ENCODE measurements at regions of chr1 and their contacts with region 1.

Region 1: DNA sequence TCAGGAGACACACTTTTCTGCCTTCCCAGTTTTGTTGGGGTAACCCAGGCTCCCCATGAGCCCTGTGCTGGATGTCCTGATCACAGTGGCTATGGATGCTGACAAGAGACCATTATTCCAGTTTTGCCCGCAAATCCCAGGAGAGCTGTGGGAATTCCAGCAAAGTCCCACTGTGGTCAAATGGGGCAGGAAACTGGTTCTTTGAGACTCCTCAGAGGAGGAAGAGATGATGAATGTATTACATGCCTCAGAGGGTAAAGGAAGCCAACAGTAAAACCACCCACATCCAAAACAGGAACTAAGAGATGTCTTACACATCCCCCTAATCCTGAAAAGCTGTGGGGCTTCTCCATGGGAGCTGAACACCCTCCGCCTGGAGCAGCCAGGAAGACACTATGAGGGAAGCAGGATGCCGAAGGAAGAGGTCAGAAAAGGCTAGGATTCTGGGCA is 12.8 kb upstream of the MPZL1 start:
- DNase-seq: no peak
- ATAC-seq: no peak
- H3K4me3 ChIP-seq: no peak overlapping the region
- H3K27ac ChIP-seq: no peak overlapping the region
- H3K4me1 ChIP-seq: no peaks in the 10 kb centered on the region
- H3K27me3 ChIP-seq: peaks cover 3% of the 10 kb centered on the region; the same call in 1 of the 2 replicates
- CTCF ChIP-seq: no peak

Region 2: GRCh38 chr1:167617153-167618147 is 91.5 kb before region 1 on chr1:
- CTCF ChIA-PET with region 1: no interaction called
- POLR2A ChIA-PET with region 1: no interaction called
- in situ Hi-C with region 1: no loop called
- intact Hi-C with region 1: no loop called
- DNase-seq: no peak
- ATAC-seq: 0 out of 2 replicates have a peak, but pooled peaks have one; percentile 30
- H3K4me3 ChIP-seq: no peak overlapping the region
- H3K27ac ChIP-seq: no peak overlapping the region
- H3K4me1 ChIP-seq: no peaks in the 10 kb centered on the region
- H3K27me3 ChIP-seq: no peaks in the 10 kb centered on the region
- CTCF ChIP-seq: no peak

Region 3: GRCh38 chr1:167749756-167750155 is 40.8 kb after region 1 on chr1:
- CTCF ChIA-PET with region 1: interaction called, 17 read pairs
- POLR2A ChIA-PET with region 1: no interaction called
- in situ Hi-C with region 1: no loop called
- intact Hi-C with region 1: no loop called
- DNase-seq: no peak
- ATAC-seq: no peak
- H3K4me3 ChIP-seq: no peak overlapping the region
- H3K27ac ChIP-seq: no peak overlapping the region
- H3K4me1 ChIP-seq: 0 out of 2 replicates have a peak, but pooled peaks cover 2% of the 10 kb centered on the region
- H3K27me3 ChIP-seq: no peaks in the 10 kb centered on the region
- CTCF ChIP-seq: no peak